CD4-positive, alpha-beta memory T cell (primary cell): ENCODE measurements at regions of chr3 and their contacts with region 1.

Region 1: DNA sequence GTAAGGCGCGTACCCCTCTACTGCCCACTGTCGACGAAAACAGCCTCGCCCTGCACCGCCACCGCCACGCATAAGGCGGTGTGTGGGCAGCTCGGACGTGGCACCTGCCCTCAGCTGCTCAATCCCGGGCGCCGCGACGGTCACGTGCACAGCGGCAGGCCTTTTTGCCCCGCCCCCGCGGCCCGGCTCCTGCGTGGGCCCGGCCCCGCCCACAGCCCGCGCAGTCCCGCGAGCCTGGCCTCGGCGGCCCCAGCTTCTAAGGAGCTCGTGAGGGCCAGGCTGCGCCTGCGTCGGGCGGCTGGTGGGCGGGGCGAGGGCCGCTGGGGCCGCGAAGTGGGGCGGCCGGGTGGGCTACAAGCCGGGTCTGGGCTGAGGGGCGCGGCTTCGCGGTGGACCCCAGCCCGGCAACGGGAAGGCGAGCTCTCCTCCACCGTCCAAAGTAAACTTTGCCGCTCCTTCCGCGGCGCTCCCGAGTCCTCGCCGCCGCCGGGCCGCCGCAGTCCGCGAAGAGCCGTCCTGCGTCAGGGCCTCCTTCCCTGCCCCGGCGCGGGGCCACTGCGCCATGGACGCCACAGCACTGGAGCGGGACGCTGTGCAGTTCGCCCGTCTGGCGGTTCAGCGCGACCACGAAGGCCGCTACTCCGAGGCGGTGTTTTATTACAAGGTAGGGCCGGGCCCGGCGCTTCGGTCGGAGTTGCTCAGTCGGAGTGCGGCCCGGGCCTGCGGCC is at the start of gene CAPN7:
- DNase-seq: peak; percentile 92 to 95 (median 94)
- H3K4me3 ChIP-seq: peak within 1 kb of the TSS; percentile 70 to 83
- H3K4me3 Mint-ChIP-seq: peak within 1 kb of the TSS; percentile 91 to 96 (median 92)
- H3K27ac ChIP-seq: peak within 1 kb of the TSS; percentile 88
- H3K27ac Mint-ChIP-seq: peak within 1 kb of the TSS; percentile 77 to 97 (median 95)
- H3K4me1 ChIP-seq: peaks cover 46% of the 10 kb centered on the region
- H3K4me1 Mint-ChIP-seq: peaks cover 18 to 43% (median 29%) of the 10 kb centered on the region in 4 donors
- H3K27me3 ChIP-seq: no peaks in the 10 kb centered on the region
- H3K27me3 Mint-ChIP-seq: no peaks in the 10 kb centered on the region
- total RNA-seq, gene CAPN7: 95.5 to 103 TPM

Region 2: DNA sequence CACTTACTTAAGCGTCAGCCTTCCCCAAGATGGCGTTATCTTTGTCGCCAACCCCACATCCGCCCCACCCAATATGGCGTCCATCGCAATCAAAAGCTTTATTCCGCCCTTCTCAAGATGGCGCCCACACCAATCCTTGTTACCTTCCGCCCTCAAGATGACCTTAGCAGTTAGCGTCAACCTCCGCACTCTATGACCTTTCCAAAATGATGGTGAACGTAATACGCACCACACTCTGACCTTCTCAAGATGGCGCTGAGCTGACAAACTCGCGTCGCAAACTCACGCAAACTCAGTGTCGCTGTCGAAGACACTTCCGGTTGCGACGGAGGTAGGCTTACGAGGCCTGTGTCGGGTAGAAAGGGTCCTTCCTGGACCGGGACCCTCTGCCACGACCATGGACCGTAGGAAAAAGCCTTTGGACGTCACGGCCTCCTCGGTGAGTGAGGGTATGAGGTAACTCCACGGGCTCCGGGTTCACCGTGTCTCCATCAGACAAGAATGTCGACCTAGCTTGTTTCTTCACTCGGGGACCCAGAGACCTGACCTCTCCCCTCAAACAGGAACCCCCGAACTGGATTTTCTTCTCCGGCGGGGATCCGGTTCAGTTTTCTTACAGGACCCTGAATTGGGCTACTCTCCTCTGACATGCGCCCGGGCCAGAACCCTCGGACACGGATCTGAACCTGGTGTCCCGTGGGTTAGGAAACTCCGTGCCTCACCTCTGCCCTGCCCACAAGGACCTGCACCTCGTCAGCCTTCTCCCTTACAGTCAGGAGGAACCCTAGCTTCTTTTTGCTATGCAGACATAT is 554.5 kb before region 1 on chr3 and contains the start of gene CCDC174:
- CTCF ChIA-PET with region 1: no interaction called
- POLR2A ChIA-PET with region 1: interaction called, 12 read pairs
- intact Hi-C with region 1: no loop called
- DNase-seq: peak; percentile 95 to 98 (median 97)
- H3K4me3 ChIP-seq: peak within 1 kb of the TSS; percentile 67 to 98
- H3K4me3 Mint-ChIP-seq: peak within 1 kb of the TSS; percentile 84 to 99 (median 94)
- H3K27ac ChIP-seq: peak within 1 kb of the TSS; percentile 98
- H3K27ac Mint-ChIP-seq: peak within 1 kb of the TSS; percentile 91 to 100 (median 98)
- H3K4me1 ChIP-seq: peaks cover 37% of the 10 kb centered on the region
- H3K4me1 Mint-ChIP-seq: peaks cover 27 to 50% (median 40%) of the 10 kb centered on the region in 4 donors
- H3K27me3 ChIP-seq: no peaks in the 10 kb centered on the region
- H3K27me3 Mint-ChIP-seq: no peaks in the 10 kb centered on the region
- total RNA-seq, gene CCDC174: 45.9 to 51.8 TPM

Region 3: GRCh38 chr3:14976317-14976716 is 229.8 kb before region 1 on chr3:
- CTCF ChIA-PET with region 1: no interaction called
- POLR2A ChIA-PET with region 1: no interaction called
- intact Hi-C with region 1: no loop called
- DNase-seq: no peak
- H3K4me3 ChIP-seq: no peak overlapping the region
- H3K4me3 Mint-ChIP-seq: no peak overlapping the region
- H3K27ac ChIP-seq: no peak overlapping the region
- H3K27ac Mint-ChIP-seq: peak overlapping the region in 4 of 7 donors; percentile 0 to 59 (median 51)
- H3K4me1 ChIP-seq: no peaks in the 10 kb centered on the region
- H3K4me1 Mint-ChIP-seq: peaks cover 32 to 44% (median 41%) of the 10 kb centered on the region in 4 donors
- H3K27me3 ChIP-seq: no peaks in the 10 kb centered on the region
- H3K27me3 Mint-ChIP-seq: no peaks in the 10 kb centered on the region

Region 4: DNA sequence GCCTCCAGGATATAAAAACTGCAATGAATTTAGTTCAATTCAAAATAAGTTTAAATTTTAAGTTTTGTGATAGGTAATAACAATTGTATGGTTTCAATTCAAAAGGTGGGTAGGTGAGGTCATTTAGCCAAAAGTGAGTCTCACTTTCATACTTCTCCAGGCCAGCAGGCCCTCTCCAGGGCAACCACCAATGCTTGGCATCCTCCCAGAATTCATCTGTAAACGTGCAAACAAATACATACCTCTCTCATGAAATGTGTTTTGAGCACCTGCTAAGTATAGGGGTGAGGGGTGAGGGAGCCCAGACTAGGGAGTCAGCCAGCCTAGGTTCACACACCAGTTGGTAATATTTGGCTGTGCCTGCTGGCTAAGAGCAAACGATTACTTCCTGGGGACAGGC is 85.1 kb before region 1 on chr3:
- CTCF ChIA-PET with region 1: interaction called, 5 read pairs
- POLR2A ChIA-PET with region 1: no interaction called
- intact Hi-C with region 1: loop called (anchors 5 kb)
- DNase-seq: no peak
- H3K4me3 ChIP-seq: no peak overlapping the region
- H3K4me3 Mint-ChIP-seq: no peak overlapping the region
- H3K27ac ChIP-seq: no peak overlapping the region
- H3K27ac Mint-ChIP-seq: no peak overlapping the region
- H3K4me1 ChIP-seq: no peaks in the 10 kb centered on the region
- H3K4me1 Mint-ChIP-seq: peaks cover 0 to 5% (median under 1%) of the 10 kb centered on the region in 4 donors
- H3K27me3 ChIP-seq: no peaks in the 10 kb centered on the region
- H3K27me3 Mint-ChIP-seq: peaks cover 0 to 3% of the 10 kb centered on the region in 2 donors

Region 5: GRCh38 chr3:15171096-15171495 is 35.0 kb before region 1 on chr3:
- CTCF ChIA-PET with region 1: no interaction called
- POLR2A ChIA-PET with region 1: no interaction called
- intact Hi-C with region 1: no loop called
- DNase-seq: no peak
- H3K4me3 ChIP-seq: no peak overlapping the region
- H3K4me3 Mint-ChIP-seq: no peak overlapping the region
- H3K27ac ChIP-seq: no peak overlapping the region
- H3K27ac Mint-ChIP-seq: no peak overlapping the region
- H3K4me1 ChIP-seq: no peaks in the 10 kb centered on the region
- H3K4me1 Mint-ChIP-seq: no peaks in the 10 kb centered on the region
- H3K27me3 ChIP-seq: peaks cover 4% of the 10 kb centered on the region
- H3K27me3 Mint-ChIP-seq: peaks cover 11 to 12% of the 10 kb centered on the region in 2 donors

Region 6: GRCh38 chr3:15241341-15241740 is 35.2 kb after region 1 on chr3:
- CTCF ChIA-PET with region 1: interaction called, 6 read pairs
- POLR2A ChIA-PET with region 1: interaction called, 4 read pairs
- intact Hi-C with region 1: loop called (anchors 5 kb)
- DNase-seq: peak; percentile 36 to 51 (median 44)
- H3K4me3 ChIP-seq: no peak overlapping the region
- H3K4me3 Mint-ChIP-seq: no peak overlapping the region
- H3K27ac ChIP-seq: no peak overlapping the region
- H3K27ac Mint-ChIP-seq: peak overlapping the region in 1 of 7 donors; percentile 73
- H3K4me1 ChIP-seq: no peaks in the 10 kb centered on the region
- H3K4me1 Mint-ChIP-seq: peaks cover 0 to 9% (median 4%) of the 10 kb centered on the region in 4 donors
- H3K27me3 ChIP-seq: no peaks in the 10 kb centered on the region
- H3K27me3 Mint-ChIP-seq: no peaks in the 10 kb centered on the region

Region 7: DNA sequence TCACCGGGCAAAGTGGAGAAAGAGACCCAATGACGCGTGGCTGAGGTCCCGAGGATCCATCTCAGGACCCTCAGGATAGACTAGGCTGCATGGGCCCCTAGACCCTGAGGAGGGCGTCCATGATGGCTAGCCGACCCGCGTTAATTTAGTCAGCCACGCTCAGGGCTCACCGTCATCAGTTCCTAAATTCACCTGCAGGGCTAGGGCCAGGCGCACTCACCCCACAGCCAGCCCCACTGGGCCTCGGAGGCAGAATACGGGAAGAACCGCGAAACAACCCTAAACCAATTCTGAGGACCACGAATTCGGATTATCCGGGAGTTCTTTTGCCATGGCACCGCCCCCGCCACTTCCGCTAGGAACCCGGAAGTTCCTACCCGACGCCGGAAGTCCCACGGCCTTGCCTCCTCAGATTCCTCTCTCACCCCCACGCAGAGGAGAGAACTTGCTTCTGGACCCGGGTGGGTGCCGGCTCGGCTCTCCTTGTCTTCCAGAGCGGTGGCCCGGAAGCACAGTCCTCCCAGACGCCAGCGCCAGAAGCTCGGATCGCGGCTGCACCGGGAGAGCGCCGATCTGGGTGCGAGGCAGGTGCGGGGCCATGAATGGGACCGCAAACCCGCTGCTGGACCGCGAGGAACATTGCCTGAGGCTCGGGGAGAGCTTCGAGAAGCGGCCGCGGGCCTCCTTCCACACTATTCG is 221.2 kb after region 1 on chr3 and contains the starts of genes EAF1 and METTL6:
- CTCF ChIA-PET with region 1: interaction called, 8 read pairs
- POLR2A ChIA-PET with region 1: interaction called, 6 read pairs
- intact Hi-C with region 1: loop called (anchors 1 kb)
- DNase-seq: peak; percentile 81 to 87 (median 83)
- H3K4me3 ChIP-seq: peak within 1 kb of the TSS; percentile 99
- H3K4me3 Mint-ChIP-seq: peak within 1 kb of the TSS; percentile 88 to 99 (median 98)
- H3K27ac ChIP-seq: peak within 1 kb of the TSS; percentile 89
- H3K27ac Mint-ChIP-seq: peak within 1 kb of the TSS; percentile 83 to 98 (median 97)
- H3K4me1 ChIP-seq: peaks cover 52% of the 10 kb centered on the region
- H3K4me1 Mint-ChIP-seq: peaks cover 32 to 80% (median 59%) of the 10 kb centered on the region in 4 donors
- H3K27me3 ChIP-seq: no peaks in the 10 kb centered on the region
- H3K27me3 Mint-ChIP-seq: no peaks in the 10 kb centered on the region
- total RNA-seq, gene EAF1: 17.6 to 19.7 TPM
- total RNA-seq, gene METTL6: 17.3 to 17.4 TPM

Region 8: DNA sequence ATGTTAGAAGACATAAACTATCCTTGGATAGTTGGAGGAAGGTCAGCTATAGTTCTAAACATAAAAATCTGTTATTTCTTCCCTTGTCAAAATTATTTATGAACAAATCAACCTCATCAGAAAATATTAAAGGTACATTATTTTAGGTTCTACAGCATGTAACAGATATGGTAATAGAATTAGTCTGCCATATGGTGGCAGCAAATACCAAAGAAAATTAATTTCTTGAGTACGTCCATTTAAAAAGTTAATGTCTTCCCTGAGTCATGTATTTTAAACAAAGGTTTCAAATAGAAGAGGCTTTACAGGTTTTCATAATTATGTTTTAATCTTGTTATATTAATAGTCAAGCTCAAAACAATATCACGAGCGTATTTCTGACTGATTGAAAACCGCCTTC is 609.6 kb after region 1 on chr3:
- CTCF ChIA-PET with region 1: interaction called, 3 read pairs
- POLR2A ChIA-PET with region 1: no interaction called
- intact Hi-C with region 1: loop called (anchors 1 kb)
- DNase-seq: peak in 3 of 5 donors; percentile 34 to 42 (median 36)
- H3K4me3 ChIP-seq: no peak overlapping the region
- H3K4me3 Mint-ChIP-seq: no peak overlapping the region
- H3K27ac ChIP-seq: no peak overlapping the region
- H3K27ac Mint-ChIP-seq: no peak overlapping the region
- H3K4me1 ChIP-seq: peaks cover 29% of the 10 kb centered on the region
- H3K4me1 Mint-ChIP-seq: peaks cover 22 to 55% (median 27%) of the 10 kb centered on the region in 4 donors
- H3K27me3 ChIP-seq: no peaks in the 10 kb centered on the region
- H3K27me3 Mint-ChIP-seq: no peaks in the 10 kb centered on the region